ENCODE measurements at regions of chr12 and their contacts with region 1.

Region 1: DNA sequence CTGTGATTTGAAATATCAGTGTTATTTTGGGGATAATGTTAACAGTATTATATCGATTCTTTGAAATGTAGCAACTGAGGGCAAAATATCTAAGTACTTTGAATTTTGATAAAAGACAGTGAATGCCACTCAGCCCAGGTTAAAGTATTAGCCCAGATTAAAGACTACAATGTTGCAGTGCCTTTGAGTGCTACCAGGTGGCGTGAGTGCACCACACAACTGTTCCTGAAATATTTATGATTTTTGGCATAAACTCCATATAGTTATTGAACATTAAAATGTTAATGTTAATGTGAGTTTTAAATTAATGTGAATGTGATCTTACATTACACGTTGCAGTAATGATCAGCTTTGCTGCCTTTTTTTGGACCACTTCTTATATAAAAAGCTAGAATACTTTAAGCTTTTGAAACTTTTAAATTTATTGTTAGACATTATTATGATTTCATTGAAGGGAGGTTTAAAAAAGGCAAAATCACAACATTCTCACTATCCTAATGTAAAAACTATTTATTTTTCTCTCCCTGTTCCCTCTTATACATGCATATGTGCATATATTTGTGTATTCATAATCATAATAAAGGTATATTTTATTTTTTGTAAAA is 22.5 kb downstream of the MRPS35 start:
- DNase-seq: no peak
- ATAC-seq: peak; percentile 81; the same call in 1 of the 2 replicates
- H3K4me3 ChIP-seq: no peak overlapping the region
- H3K27ac ChIP-seq: no peak overlapping the region
- H3K4me1 ChIP-seq: no peaks in the 10 kb centered on the region; the same call in 1 of the 2 replicates
- H3K27me3 ChIP-seq: no peaks in the 10 kb centered on the region
- CTCF ChIP-seq: peak; percentile 79; the same call in 1 of the 2 replicates

Region 2: DNA sequence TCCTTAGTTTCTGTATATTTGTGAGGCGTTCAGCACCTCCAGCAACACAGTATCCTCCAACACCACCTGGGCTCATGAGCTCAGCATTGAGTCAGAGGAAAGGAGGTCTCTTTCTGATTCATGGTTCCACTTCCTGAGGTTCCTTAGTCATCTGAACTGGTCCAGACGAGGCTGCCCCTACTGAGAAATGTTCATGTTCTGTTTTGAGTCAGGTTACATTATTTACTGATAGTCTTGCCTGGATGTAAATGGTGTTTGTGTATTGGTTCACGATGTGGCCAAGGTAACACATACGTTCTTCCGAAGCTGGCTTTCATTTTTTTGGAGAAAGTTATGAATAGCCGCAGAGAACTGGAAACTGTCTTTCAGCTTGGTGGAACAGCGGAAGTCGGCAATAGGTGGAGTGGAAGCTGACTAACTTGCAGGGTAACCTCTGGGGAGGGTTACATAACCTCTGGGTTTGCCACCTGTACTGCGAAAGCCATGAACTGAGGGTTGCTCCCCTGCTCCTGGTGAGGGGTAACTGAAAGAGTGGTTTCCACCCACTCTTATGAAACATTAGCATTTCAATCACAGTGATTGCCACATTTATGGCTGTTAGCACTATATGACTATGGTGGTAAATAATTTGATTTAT is 89.0 kb after region 1 on chr12:
- CTCF ChIA-PET with region 1: interaction called, 4 read pairs
- POLR2A ChIA-PET with region 1: no interaction called
- in situ Hi-C with region 1: no loop called
- intact Hi-C with region 1: loop called (anchors 2 kb)
- DNase-seq: peak; percentile 61
- ATAC-seq: peak; percentile 78
- H3K4me3 ChIP-seq: no peak overlapping the region
- H3K27ac ChIP-seq: no peak overlapping the region
- H3K4me1 ChIP-seq: peaks cover 7% of the 10 kb centered on the region; the same call in 1 of the 2 replicates
- H3K27me3 ChIP-seq: no peaks in the 10 kb centered on the region
- CTCF ChIP-seq: no peak

Region 3: GRCh38 chr12:27940756-27941402 is 207.7 kb after region 1 on chr12:
- CTCF ChIA-PET with region 1: interaction called, 4 read pairs
- POLR2A ChIA-PET with region 1: no interaction called
- in situ Hi-C with region 1: no loop called
- intact Hi-C with region 1: loop called (anchors 1 kb)
- DNase-seq: peak; percentile 87
- ATAC-seq: peak; percentile 95
- H3K4me3 ChIP-seq: no peak overlapping the region
- H3K27ac ChIP-seq: no peak overlapping the region
- H3K4me1 ChIP-seq: no peaks in the 10 kb centered on the region
- H3K27me3 ChIP-seq: no peaks in the 10 kb centered on the region
- CTCF ChIP-seq: peak; percentile 96

Region 4: GRCh38 chr12:28172434-28173030 is 439.4 kb after region 1 on chr12:
- CTCF ChIA-PET with region 1: interaction called, 10 read pairs
- POLR2A ChIA-PET with region 1: no interaction called
- in situ Hi-C with region 1: no loop called
- intact Hi-C with region 1: no loop called
- DNase-seq: peak; percentile 59
- ATAC-seq: peak; percentile 84
- H3K4me3 ChIP-seq: no peak overlapping the region
- H3K27ac ChIP-seq: no peak overlapping the region
- H3K4me1 ChIP-seq: no peaks in the 10 kb centered on the region
- H3K27me3 ChIP-seq: no peaks in the 10 kb centered on the region
- CTCF ChIP-seq: peak; percentile 77

Measured in Panc1 (cell line).